IMR-90 (cell line): ENCODE measurements at regions of chr7 and their contacts with region 1.

Region 1: DNA sequence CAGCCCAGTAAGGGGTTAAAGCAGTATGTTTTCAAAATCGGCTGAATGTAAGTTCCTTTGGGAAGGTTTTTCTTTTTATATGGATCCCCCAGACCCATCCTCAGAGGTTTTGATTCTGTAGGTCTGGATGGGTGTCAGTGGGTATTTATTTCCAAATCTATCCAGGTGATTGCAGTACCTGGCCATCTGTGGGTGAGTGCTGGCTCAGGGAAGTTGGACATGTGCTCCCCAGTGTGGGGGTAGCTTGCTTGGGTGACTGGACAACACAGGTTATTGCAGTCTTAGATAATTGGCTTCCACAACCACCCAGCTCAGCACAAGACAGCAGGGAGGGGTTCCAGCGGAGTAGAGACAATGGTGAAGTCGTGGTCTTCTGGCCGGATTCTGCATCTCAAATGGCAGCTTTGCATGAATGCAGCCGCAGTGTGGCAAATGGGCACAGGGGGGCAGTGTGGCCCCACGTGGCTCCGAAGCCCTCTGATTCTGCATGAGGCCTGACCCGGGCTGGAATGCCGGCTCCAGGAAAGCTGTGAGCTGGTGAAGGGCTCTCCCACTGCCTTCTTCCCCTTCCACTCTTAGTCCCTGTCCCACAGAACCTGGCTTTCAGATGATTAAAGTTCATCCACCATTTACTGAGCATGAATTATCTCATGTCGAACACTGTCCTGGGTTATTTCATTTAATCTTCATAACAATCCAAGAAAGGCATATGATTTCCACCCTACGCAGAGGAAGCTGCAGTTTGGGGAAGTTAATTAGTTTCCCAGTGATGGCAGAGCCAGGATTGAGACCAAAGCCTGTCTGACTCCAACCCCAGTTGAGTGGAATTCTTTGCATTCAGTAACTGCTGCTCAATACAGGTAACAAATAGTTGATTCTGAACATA is 64.5 kb upstream of the SYPL1 start:
- DNase-seq: peak; percentile 69
- ATAC-seq: peak; percentile 96
- H3K4me3 ChIP-seq: no peak overlapping the region
- H3K27ac ChIP-seq: no peak overlapping the region
- H3K4me1 ChIP-seq: peaks cover 5% of the 10 kb centered on the region; the same call in 1 of the 2 replicates
- H3K27me3 ChIP-seq: peaks cover 1% of the 10 kb centered on the region; the same call in 1 of the 2 replicates
- CTCF ChIP-seq: peak; percentile 98
- POLR2A ChIP-seq: peak; percentile 64
- RAD21 ChIP-seq: peak; percentile 99

Region 2: DNA sequence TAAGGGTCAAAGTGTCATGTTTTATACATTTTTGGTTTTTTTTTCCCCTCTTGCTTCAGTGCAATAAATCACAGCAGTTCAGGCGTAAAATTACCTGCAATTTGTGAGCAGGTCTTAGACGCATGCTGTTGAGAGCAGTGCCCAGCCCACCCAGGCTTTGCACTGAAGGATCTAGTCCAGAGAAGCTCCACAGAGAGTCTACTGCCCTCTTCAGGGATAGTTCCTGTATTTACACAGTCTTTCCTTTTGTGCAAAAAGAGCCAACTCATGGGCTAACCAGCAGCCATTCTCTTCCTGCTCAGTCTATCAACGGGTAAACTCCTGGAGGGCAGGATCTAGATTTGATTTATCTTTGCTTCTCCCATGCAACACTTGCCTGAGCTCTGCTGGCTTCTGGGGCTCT is 190.4 kb after region 1 on chr7:
- CTCF ChIA-PET with region 1: interaction called, 4 read pairs
- POLR2A ChIA-PET with region 1: no interaction called
- dilution Hi-C with region 1: no loop called
- in situ Hi-C with region 1: no loop called
- intact Hi-C with region 1: loop called (anchors 1 kb)
- DNase-seq: peak; percentile 22
- ATAC-seq: peak; percentile 73
- H3K4me3 ChIP-seq: no peak overlapping the region
- H3K27ac ChIP-seq: no peak overlapping the region
- H3K4me1 ChIP-seq: no peaks in the 10 kb centered on the region
- H3K27me3 ChIP-seq: no peaks in the 10 kb centered on the region; the same call in 1 of the 2 replicates
- CTCF ChIP-seq: peak; percentile 58
- POLR2A ChIP-seq: no peak
- RAD21 ChIP-seq: peak; percentile 56

Region 3: DNA sequence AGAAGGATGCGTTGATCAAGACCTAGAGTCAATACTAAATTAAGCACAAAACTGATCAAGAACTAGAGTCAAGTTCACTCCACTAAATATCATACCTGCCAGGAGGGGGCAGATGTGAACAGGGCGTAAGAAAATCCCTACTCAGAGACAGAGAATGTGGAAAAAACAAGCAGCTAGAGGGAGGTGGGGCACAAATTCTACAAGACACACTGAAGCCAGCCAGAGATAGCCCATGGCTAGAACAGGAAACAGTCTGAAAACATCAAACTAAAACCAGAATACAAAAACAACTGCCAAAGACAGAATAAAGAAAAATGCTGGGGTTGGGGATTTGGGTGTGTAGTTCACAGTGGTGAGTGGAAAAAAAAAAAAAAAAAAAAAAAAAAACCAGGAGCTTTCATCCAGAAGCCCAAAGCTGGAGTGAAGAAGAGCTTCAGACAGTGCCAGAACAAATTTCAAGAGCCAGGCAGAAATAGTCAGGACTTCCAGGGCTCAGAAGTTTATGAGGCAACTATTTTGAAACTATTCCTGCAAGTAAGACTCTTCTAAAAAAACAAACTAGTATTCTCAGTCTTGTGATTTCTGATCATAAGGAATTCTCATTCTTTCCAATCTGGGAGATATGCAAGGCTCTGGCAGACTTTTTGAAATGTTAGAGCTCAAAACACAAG is 366.0 kb after region 1 on chr7:
- CTCF ChIA-PET with region 1: interaction called, 11 read pairs
- POLR2A ChIA-PET with region 1: no interaction called
- dilution Hi-C with region 1: no loop called
- in situ Hi-C with region 1: no loop called
- intact Hi-C with region 1: loop called (anchors 1 kb)
- DNase-seq: peak; percentile 89
- ATAC-seq: peak; percentile 96
- H3K4me3 ChIP-seq: no peak overlapping the region
- H3K27ac ChIP-seq: peak overlapping the region; percentile 81; the same call in 1 of the 2 replicates
- H3K4me1 ChIP-seq: peaks cover 8% of the 10 kb centered on the region
- H3K27me3 ChIP-seq: no peaks in the 10 kb centered on the region
- CTCF ChIP-seq: peak; percentile 69
- POLR2A ChIP-seq: no peak
- RAD21 ChIP-seq: peak; percentile 77

Region 4: DNA sequence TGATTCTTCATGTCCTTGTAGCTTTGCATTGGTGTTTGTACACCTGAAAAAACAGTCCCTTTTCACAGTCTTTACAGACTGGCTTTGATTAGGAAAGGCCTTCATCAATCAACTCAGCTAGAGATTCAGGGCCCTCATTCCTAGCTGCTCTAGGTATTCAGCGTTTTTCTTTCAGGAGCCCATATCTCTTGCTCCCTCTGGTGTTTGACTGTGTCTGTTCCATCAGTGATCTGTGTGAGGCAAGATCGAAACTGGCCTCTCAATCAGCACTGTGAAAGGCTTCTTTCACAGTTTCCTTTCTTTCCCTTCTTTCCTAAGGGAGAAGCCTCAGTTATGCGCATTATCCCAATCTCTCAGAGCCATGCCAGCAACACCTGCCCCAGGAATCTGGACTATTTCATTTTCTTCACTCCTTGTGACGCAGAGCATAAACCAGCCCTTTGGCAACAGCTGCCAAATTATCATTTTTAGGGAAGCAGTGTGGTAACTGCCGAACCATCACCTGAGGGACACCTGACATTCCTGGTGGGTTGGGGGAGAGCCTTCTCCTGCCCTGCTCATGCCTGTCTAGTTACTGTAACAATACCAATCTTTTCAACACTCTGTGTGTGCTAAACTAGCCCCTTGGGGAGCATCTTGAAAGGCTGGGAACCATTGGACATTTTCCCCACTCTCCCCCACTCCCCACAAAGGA is 560.0 kb after region 1 on chr7:
- CTCF ChIA-PET with region 1: interaction called, 19 read pairs
- POLR2A ChIA-PET with region 1: interaction called, 3 read pairs
- dilution Hi-C with region 1: no loop called
- in situ Hi-C with region 1: loop called (anchors 5 kb)
- intact Hi-C with region 1: loop called (anchors 1 kb)
- DNase-seq: peak; percentile 83
- ATAC-seq: peak; percentile 95
- H3K4me3 ChIP-seq: no peak overlapping the region; the same call in 1 of the 2 replicates
- H3K27ac ChIP-seq: peak overlapping the region; percentile 77
- H3K4me1 ChIP-seq: peaks cover 5% of the 10 kb centered on the region
- H3K27me3 ChIP-seq: no peaks in the 10 kb centered on the region
- CTCF ChIP-seq: peak; percentile 82
- POLR2A ChIP-seq: no peak
- RAD21 ChIP-seq: peak; percentile 89

Region 5: GRCh38 chr7:107044347-107045194 is 867.9 kb after region 1 on chr7 and contains the start of gene PRKAR2B:
- CTCF ChIA-PET with region 1: no interaction called
- POLR2A ChIA-PET with region 1: no interaction called
- dilution Hi-C with region 1: no loop called
- in situ Hi-C with region 1: no loop called
- intact Hi-C with region 1: loop called (anchors 10 kb)
- DNase-seq: peak; percentile 64
- ATAC-seq: peak; percentile 97
- H3K4me3 ChIP-seq: peak within 1 kb of the TSS; percentile 93
- H3K27ac ChIP-seq: peak within 1 kb of the TSS; percentile 51
- H3K4me1 ChIP-seq: peaks cover 4% of the 10 kb centered on the region; the same call in 1 of the 2 replicates
- H3K27me3 ChIP-seq: no peaks in the 10 kb centered on the region
- CTCF ChIP-seq: 0 out of 2 replicates have a peak, but pooled peaks have one; percentile 14
- POLR2A ChIP-seq: no peak
- RAD21 ChIP-seq: no peak
- total RNA-seq, gene PRKAR2B: 3.0 and 8.1 TPM in 2 replicates